BJ (cell line): ENCODE measurements at regions of chr13 and their contacts with region 1.

Region 1: GRCh38 chr13:29923554-29924481 is 73.4 kb upstream of the UBL3 start:
- DNase-seq: peak; percentile 96
- H3K4me3 ChIP-seq: no peak overlapping the region
- H3K27me3 ChIP-seq: no peaks in the 10 kb centered on the region
- CTCF ChIP-seq: peak; percentile 95

Region 2: DNA sequence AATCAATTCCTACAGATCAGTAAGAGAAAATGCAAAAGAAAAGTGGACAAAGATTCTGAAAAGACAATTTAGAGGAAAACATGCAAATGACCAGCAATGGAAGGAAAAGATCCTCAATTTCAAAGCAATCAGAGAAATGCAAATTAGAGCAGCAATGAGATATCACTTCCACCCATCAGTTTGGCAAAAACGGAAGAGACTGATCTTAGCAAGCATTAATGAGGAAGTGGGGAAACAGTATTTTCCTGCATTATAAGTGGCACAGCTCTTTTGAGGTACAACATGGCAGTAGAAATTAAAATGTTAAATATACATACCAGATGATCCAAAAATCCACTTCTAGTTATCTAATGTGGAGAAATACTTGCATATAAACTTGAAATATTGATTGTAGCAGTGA is 259.2 kb before region 1 on chr13:
- CTCF ChIA-PET with region 1: no interaction called
- POLR2A ChIA-PET with region 1: no interaction called
- DNase-seq: no peak
- H3K4me3 ChIP-seq: no peak overlapping the region
- H3K27me3 ChIP-seq: no peaks in the 10 kb centered on the region
- CTCF ChIP-seq: no peak

Region 3: DNA sequence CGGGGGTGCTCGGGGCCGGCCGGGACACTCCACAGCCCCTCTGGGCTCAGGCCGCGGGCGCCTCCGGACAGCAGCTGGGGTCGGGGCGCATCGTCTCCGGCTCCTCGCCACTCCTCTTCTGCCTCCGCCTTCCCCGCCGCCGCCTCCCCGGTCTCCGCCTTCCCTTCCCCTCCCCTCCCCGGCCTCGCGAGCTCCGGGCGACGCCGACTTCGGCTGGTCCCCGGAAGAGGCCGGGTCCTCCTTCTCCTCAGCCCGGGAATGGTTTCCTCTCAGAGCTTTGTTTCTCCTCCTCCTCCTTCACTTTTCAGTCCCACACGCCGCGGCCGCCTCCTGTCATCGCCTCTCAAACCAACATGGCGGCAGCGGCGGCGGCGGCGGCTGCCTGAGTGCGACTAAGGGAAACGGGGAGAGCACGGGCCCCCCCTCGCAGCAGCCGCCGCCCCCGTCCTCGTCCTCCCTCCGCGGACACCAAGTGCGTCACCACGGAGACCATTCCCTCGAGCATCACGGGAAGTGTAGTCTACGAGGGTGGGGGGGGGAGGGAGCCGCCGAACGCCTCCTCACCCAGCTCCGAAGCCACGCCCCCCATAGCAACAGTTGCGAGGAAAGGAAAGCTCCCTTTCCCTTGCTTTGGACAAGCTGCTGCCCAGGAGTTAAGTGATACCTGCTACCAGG is 73.5 kb before region 1 on chr13 and contains the start of gene UBL3:
- CTCF ChIA-PET with region 1: interaction called, 37 read pairs
- POLR2A ChIA-PET with region 1: interaction called, 3 read pairs
- DNase-seq: peak; percentile 71
- H3K4me3 ChIP-seq: peak within 1 kb of the TSS; percentile 75
- H3K27me3 ChIP-seq: no peaks in the 10 kb centered on the region
- CTCF ChIP-seq: no peak
- polyA plus RNA-seq, gene UBL3: 18.0 and 33.0 TPM in 2 replicates

Region 4: GRCh38 chr13:29908416-29908815 is 15.4 kb before region 1 on chr13:
- CTCF ChIA-PET with region 1: interaction called, 12 read pairs
- POLR2A ChIA-PET with region 1: interaction called, 5 read pairs
- DNase-seq: peak; percentile 74
- H3K4me3 ChIP-seq: no peak overlapping the region
- H3K27me3 ChIP-seq: no peaks in the 10 kb centered on the region; the same call in 1 of the 2 replicates
- CTCF ChIP-seq: no peak

Region 5: DNA sequence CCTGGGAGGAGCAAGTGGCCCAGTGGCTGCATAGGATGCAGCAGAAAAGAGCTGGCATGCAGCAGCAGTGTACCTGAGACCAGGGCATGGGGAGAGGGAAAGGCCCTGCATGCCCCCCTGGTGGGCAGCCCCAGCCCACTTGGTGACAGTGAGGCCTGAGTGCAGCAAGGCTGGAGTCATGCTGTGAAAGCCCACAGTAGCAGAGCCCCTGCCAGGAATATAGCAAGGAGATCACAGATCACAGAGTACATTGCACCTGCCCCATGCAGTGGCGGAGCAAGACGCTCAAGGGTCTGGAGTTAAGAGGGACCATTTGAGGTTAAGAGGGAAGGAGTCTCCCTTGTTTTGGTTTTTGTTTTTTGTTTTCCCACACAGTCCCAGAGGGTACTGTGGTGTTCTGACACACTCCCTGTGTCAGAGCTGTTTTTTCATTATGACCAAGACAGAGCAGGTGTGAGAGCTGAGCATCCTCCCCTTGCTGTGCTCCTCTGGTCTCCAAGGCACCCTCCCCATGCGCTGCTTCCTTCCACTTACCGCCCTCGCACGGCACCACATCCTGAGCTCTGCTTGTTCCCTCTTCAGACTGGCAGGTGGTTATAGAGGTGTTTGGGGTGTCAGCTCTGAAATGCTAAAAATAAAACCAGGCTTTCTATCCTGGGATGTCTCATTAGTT is 11.6 kb after region 1 on chr13:
- CTCF ChIA-PET with region 1: interaction called, 43 read pairs
- POLR2A ChIA-PET with region 1: interaction called, 3 read pairs
- DNase-seq: no peak
- H3K4me3 ChIP-seq: no peak overlapping the region
- H3K27me3 ChIP-seq: no peaks in the 10 kb centered on the region; the same call in 1 of the 2 replicates
- CTCF ChIP-seq: no peak

Region 6: GRCh38 chr13:30027569-30028455 is 104.0 kb after region 1 on chr13:
- CTCF ChIA-PET with region 1: interaction called, 12 read pairs
- POLR2A ChIA-PET with region 1: no interaction called
- DNase-seq: no peak
- H3K4me3 ChIP-seq: no peak overlapping the region
- H3K27me3 ChIP-seq: no peaks in the 10 kb centered on the region
- CTCF ChIP-seq: no peak

Region 7: DNA sequence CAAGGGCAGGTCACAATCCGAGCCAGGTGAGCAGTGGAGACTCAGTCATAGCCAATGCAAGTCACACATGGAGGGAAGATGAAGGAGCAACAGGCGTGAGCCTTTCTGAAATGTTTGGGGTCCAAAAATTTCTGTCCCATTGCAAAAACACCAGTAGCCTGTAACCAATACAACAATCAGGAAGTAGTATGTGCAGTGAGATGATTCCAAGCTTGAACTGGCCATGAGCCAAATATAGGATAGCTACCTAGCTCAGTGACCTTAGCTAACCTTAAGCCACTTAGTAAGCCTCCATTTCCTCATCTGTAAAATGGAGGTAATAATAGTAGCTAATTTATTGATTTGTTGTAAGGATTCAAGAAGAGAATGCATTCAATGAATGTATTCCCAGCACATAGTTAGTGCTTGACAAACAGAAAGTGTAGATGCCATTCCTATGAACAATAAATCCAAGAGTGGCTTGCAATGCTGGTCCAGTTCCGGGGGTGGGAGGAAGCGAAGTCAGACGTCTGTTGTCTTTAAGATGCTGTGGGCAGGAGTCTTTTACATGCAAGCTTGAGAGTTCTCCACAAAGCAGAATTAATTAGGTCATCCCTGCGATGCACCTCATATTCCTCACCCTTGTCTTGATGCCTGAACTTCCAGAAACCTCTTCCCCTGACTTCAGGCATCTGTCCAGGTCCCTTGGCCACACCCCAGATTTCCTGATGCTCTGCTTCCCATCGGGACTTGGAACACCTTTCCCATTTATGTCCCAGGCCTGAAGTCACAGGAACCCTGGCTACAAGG is 122.3 kb after region 1 on chr13:
- CTCF ChIA-PET with region 1: no interaction called
- POLR2A ChIA-PET with region 1: no interaction called
- DNase-seq: peak; percentile 55
- H3K4me3 ChIP-seq: no peak overlapping the region
- H3K27me3 ChIP-seq: no peaks in the 10 kb centered on the region
- CTCF ChIP-seq: no peak

Region 8: DNA sequence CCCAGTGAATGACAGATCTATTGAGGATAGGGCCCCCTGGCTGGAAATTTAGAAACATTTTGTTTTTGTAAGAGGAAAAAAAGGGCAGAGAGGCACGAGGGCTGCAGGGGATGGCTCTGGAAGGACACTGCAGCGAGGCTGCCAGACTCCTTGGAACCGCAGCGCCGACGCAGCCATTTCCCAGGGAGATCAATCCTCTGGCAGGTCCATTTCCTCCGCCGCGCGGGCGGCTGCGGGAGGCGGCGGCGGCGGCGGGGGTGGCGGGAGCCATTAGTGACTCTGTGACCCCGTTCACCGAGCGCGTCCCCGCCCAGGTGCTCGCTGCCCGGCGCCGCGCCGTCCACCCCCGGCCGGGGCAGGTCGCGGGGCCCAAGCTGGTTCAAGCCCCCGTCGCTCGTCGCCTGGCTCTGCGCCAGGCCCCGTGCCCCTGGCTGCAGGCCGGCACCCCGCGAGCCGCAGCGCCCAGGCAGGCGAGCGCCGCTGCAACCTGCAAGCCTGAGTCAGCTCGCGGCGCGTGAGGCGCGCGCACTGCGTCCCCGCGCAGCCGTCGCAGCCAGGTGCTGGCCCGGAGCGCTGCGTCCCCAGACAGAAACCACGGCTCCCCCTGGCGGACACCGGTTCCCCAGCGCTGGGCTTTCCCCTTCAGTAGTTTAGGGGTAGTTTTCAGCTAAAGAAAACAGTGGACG is 190.9 kb after region 1 on chr13:
- CTCF ChIA-PET with region 1: interaction called, 51 read pairs
- POLR2A ChIA-PET with region 1: no interaction called
- DNase-seq: no peak
- H3K4me3 ChIP-seq: peak overlapping the region; percentile 43
- H3K27me3 ChIP-seq: no peaks in the 10 kb centered on the region
- CTCF ChIP-seq: peak; percentile 90